Activated T-helper 1 cell treated with anti-CD3 and anti-CD28 coated beads, Interleukin-12 subunit alpha, Interleukin-12 subunit beta, Interleukin-2, Interleukin-4 antibody, amounts not matched to agents 30 ng/mL and 10 ng/mL and 1 ng/mL, durations not matched to agents 14 hours and 24 hours and 36 hours (primary cell): ENCODE measurements at regions of chr17 and their contacts with region 1.

Region 1: DNA sequence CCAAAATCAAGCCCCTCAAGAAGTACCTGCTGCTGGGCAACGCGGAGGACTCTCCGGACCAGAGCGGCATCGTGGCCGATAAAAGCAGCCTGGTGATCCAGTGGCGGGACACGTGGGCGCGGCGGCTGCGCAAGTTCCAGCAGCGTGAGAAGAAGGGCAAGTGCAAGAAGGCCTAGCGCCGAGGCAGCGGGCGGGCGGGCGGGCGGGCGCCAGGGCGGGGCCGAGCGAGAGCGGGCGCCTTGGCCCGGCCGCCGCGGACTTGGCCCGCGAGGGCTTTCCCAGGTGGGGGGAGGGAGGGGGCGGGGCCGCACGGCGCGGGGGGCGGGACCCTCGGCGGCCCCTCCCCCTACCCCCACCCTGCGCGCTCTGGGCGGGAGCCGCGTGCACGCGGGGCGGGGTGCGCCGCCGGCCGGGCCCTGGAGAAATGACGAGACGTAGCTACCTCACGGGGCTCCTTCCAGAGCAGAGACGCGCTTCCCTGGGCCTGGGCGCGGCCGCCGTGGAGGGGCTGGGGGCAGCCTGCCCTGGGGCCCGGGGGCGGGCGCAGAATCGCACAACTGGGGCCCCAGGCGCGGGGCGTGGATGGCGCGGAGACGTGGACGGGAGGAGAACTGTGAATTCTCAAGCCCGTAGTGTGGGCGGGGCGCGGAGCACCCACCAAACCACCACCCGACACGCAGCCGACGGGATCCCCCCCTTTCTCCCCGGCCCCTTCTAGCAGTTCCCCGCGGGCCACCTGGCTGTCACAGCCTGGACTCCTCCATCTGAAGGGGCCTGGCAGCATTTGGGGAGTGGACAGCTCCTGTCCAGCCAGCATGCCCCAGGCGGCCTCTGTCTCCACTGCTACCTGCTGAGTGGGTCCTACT is 218.7 kb downstream of the NTN1 start:
- DNase-seq: peak; percentile 61
- H3K4me3 Mint-ChIP-seq: peak overlapping the region; percentile 77
- H3K27ac Mint-ChIP-seq: peak overlapping the region; percentile 63
- H3K4me1 Mint-ChIP-seq: peaks cover 12% of the 10 kb centered on the region
- H3K27me3 Mint-ChIP-seq: no peaks in the 10 kb centered on the region

Region 2: GRCh38 chr17:8489841-8490240 is 750.2 kb before region 1 on chr17:
- intact Hi-C with region 1: no loop called
- DNase-seq: no peak
- H3K4me3 Mint-ChIP-seq: no peak overlapping the region
- H3K27ac Mint-ChIP-seq: no peak overlapping the region
- H3K4me1 Mint-ChIP-seq: no peaks in the 10 kb centered on the region
- H3K27me3 Mint-ChIP-seq: no peaks in the 10 kb centered on the region

Region 3: GRCh38 chr17:9256751-9257629 is 17.0 kb after region 1 on chr17:
- intact Hi-C with region 1: loop called (anchors 1 kb)
- DNase-seq: no peak
- H3K4me3 Mint-ChIP-seq: no peak overlapping the region
- H3K27ac Mint-ChIP-seq: no peak overlapping the region
- H3K4me1 Mint-ChIP-seq: peaks cover 13% of the 10 kb centered on the region
- H3K27me3 Mint-ChIP-seq: peaks cover 1% of the 10 kb centered on the region

Region 4: DNA sequence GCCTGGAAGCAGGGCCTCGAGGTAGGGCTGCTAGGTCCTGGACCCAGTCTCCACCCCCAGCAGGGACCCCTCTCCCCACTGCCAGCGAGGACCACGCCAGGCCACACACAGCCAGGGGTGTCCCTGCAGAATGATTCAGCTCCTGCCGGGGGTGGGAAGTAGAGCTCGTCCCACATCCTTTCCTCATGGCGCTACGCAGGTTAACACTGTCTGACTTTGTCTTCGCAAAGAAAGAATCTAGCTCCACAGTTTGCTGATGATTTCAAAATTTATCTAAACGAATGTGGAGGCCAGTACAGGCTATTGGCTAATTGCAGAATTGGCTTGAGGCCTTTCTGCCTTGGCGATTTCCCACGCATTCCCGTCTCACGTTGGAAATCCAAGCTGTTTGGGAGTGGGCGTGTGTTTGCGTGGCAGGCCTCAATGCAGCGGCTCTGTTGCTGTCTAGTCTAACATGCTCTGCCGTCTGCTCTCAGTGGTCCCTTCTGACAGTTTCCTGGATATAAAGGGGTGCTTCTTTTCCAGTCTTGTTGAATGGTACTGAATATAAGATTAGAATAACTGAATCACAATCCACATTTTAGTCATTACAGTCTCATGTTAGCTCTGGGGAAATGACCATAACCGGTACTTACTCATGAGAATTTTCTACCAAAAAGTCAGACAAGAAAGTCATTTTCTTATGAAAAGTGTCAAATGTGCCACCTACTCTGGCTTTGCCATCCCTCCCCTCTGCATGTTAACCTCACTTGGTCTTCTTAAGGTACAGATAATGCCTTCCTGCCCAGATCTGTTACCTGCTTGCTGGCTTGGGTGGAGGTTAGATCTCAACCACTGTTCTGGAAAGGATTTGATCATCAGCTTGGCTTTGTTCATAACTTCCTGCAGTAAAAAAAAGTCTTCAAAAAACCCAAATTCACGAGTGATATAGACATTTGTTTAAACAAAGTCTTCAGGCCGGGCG is 33.7 kb after region 1 on chr17:
- intact Hi-C with region 1: loop called (anchors 5 kb)
- DNase-seq: no peak
- H3K4me3 Mint-ChIP-seq: peak overlapping the region; percentile 17
- H3K27ac Mint-ChIP-seq: peak overlapping the region; percentile 77
- H3K4me1 Mint-ChIP-seq: peaks cover 18% of the 10 kb centered on the region
- H3K27me3 Mint-ChIP-seq: no peaks in the 10 kb centered on the region